Caco-2 (cell line): ENCODE measurements at regions of chr13 and their contacts with region 1.

Region 1: DNA sequence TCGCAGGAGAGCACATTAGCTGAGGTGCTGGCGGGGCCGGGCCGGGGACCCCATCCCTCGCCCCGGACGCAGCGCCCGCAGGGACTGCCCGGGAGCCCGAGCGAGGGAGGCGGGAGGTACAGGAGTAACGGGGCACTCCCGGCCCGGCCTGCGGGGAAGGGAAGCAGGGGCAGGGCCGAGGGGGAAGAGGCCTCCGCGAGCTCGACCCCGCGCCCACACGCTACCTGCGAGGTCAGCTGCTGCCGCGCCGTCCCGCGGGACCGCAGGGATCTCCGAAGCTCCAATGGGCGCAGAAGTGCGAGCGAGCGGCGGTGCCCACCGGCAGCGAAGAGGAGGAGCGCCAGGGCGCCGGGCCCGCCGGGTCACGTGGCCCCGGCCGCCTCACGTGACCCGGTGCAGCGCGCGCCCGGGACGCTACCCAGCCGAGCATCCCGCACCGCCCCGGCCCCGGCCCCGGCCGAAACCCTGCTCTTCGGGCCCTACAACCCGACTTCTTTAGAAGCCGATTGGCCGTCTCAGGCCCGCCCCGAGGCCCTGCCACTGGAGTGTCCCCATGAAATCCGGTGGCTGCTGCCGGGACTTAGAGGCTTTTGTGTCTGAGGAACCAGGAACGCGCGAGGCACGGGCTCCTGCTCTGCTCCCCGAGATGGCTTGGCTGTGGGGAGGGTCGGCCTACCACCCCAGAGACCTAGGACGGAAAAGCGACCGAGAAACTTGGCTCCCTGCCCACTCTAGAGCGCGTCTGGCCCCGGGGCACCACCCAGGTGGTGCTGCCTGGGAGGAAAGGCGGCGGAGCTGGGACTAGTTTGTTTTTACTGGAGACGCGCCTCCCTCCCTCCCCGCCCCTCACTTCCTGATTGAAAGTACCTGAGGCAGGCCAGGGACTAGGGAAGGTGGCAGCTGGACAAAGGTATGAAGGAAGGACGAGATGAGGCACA is at the start of gene RCBTB1:
- DNase-seq: peak; percentile 73 to 76
- H3K4me3 ChIP-seq: peak within 1 kb of the TSS; percentile 97
- H3K4me3 Mint-ChIP-seq: peak within 1 kb of the TSS; percentile 84
- H3K27ac Mint-ChIP-seq: peak within 1 kb of the TSS; percentile 84
- H3K4me1 ChIP-seq: peaks cover 19% of the 10 kb centered on the region
- H3K4me1 Mint-ChIP-seq: peaks cover 16% of the 10 kb centered on the region
- H3K27me3 ChIP-seq: no peaks in the 10 kb centered on the region
- H3K27me3 Mint-ChIP-seq: no peaks in the 10 kb centered on the region
- CTCF ChIP-seq: no peak
- total RNA-seq, gene RCBTB1: 23.0 and 25.7 TPM in 2 replicates

Region 2: DNA sequence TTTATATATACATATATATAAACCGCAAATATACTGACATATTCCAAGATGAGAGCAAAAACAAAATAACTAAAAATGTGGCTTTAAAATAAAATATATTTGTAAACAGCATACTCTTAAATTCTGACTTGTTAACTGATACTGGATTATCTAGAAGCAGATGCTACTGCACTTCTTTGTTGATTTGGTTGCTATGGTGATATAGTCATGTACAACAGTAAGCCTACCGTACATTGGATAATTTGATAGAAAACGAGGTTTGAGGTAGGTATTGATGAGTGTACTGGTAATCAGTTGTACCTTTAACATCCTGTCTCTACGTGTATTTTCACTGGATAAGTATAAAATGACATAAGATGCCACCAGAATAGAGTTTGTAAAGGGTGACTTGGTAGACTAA is 552.4 kb before region 1 on chr13:
- CTCF ChIA-PET with region 1: no interaction called
- POLR2A ChIA-PET with region 1: no interaction called
- intact Hi-C with region 1: no loop called
- DNase-seq: no peak
- H3K4me3 ChIP-seq: no peak overlapping the region
- H3K4me3 Mint-ChIP-seq: no peak overlapping the region
- H3K27ac Mint-ChIP-seq: no peak overlapping the region
- H3K4me1 ChIP-seq: no peaks in the 10 kb centered on the region
- H3K4me1 Mint-ChIP-seq: no peaks in the 10 kb centered on the region
- H3K27me3 ChIP-seq: no peaks in the 10 kb centered on the region
- H3K27me3 Mint-ChIP-seq: no peaks in the 10 kb centered on the region
- CTCF ChIP-seq: no peak

Region 3: DNA sequence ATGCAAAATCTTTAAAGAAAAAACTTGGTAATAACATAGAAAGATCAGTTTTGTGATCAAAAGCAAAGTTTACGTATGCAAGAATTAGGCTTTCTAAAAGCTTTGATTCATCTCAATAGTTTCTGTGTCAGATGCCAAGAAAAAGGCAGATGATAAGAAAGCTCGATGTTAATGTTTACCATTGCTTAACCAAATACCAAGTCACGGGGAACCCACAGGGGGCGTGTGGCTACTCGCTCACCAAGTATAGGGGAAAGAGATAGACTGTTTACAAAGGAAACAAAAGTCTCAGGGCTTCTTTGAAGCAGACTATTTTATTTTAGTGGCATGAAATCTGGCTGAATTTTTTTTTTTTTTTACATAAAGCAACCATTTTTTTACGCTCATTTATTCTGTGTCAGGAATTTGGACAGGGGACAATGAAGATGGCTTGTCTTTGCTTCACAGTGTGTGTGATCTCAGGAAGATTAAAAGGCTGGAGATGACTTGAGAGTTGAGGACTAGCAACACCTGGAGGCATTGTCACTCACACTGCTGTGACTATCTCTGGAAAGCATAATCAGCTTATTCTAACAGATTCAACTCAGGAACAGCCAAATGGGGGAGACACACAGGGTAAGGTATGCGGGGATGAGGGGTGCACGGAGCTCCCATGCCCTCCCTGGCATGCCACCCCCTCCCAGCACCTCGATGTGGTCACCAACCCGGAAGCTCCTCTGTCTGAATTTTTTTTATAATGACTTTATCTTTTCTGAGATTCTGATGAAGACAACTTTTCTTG is 25.0 kb before region 1 on chr13:
- CTCF ChIA-PET with region 1: interaction called, 10 read pairs
- POLR2A ChIA-PET with region 1: no interaction called
- intact Hi-C with region 1: loop called (anchors 1 kb)
- DNase-seq: peak; percentile 76 to 79
- H3K4me3 ChIP-seq: no peak overlapping the region
- H3K4me3 Mint-ChIP-seq: peak overlapping the region; percentile 45
- H3K27ac Mint-ChIP-seq: peak overlapping the region; percentile 74
- H3K4me1 ChIP-seq: peaks cover 11% of the 10 kb centered on the region
- H3K4me1 Mint-ChIP-seq: peaks cover 21% of the 10 kb centered on the region
- H3K27me3 ChIP-seq: no peaks in the 10 kb centered on the region
- H3K27me3 Mint-ChIP-seq: no peaks in the 10 kb centered on the region
- CTCF ChIP-seq: peak; percentile 62 to 71